Pancreas (tissue), 10 donors: ENCODE measurements at regions of chr15 and their contacts with region 1.

Region 1: DNA sequence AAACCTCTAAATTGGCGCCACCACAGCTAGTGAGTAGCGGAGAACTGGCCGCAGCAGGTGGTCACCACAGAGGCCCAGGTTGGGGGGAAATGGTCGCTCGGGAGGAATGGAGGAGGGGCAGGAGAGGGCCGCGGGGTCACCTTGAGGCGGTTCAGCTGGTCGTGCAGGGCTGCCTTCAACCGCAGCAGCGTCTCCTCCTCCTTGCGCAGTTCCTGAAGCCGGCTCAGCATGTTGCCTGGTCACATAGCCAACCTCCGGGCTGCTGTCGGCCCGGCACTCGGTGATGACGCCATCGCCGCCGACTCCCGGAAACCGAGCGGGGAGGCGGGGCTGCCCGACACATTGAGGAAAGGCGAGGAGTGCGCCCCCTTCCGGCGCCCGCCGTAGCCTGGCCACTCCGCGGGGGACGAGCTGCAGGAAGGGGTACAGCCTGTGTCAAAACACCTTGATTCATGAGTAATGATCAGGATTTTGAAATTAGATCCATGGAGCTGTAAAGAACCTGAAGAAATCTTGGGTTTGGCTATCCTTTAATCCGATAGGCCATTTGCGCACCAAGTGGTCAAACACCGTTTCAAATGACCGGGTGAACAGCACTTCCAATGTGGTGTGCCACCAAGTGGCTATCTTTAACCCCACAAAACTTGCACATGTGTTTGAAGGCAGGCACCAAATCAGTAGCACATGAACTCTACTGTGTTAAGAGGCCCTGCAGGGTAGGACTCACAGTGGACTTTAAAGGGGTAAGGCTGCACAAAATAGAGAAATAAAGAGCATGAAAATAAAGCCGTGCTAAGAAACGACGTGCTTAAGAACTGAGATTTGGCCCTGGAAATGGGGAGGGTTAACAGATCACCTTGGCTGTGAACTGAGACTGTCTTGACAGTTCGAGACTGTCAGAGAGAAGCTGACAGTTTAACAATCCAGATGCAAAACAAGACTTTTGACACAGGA is at the start of gene SNAPC5:
- DNase-seq: peak; percentile 94 to 99 (median 96)
- ATAC-seq: peak; percentile 96 to 98 (median 96)
- H3K4me3 ChIP-seq: peak within 1 kb of the TSS; percentile 52 to 94 (median 74)
- H3K27ac ChIP-seq: peak within 1 kb of the TSS; percentile 64 to 83 (median 74)
- H3K4me1 ChIP-seq: peaks cover 0 to 30% (median 25%) of the 10 kb centered on the region in 3 donors
- H3K27me3 ChIP-seq: no peaks in the 10 kb centered on the region
- CTCF ChIP-seq: peak; percentile 94 to 99 (median 98)
- total RNA-seq, gene SNAPC5: 9.0 to 15.1 (median 11.3) TPM

Region 2: DNA sequence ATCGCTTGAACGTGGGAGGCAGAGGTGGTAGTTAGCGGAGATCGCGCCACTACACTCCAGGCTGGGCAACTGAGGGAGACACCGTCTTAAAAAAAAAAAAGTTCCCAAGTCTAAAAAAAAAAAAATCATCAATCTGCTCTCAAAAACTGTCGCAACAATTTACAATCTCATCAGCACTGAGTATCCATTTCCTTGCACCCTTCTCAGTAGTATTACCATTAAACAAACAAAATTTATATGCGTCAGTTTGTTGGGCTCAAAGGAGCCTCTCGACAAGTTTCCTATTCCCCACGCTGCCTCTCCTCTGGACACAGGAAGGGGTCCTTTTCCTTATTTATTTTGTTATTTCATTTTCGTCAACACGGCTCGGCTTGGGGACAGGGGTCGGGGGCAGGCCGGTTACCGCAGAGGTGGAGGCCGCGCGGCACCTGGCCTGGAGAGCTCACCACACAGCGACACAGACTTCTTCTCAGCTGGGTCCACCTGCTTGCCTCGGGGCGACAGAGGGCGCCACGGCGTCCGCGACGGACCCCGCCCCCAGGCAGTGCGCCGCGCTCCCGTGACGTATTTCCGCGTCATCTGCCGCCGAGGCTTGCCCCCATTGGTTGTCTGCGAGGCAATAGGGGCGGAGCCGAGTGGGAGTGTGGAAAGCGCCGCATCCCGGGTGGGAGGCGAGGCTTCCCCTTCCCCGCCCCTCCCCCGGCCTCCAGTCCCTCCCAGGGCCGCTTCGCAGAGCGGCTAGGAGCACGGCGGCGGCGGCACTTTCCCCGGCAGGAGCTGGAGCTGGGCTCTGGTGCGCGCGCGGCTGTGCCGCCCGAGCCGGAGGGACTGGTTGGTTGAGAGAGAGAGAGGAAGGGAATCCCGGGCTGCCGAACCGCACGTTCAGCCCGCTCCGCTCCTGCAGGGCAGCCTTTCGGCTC is 111.3 kb before region 1 on chr15 and contains the start of gene MAP2K1:
- intact Hi-C with region 1: loop called in 2 of 3 experiments (anchors 10 kb)
- DNase-seq: peak; percentile 98 to 99 (median 99)
- ATAC-seq: peak; percentile 92 to 98 (median 94)
- H3K4me3 ChIP-seq: peak within 1 kb of the TSS; percentile 72 to 93 (median 77)
- H3K27ac ChIP-seq: peak within 1 kb of the TSS; percentile 79 to 94 (median 87)
- H3K4me1 ChIP-seq: peaks cover 0 to 17% (median 7%) of the 10 kb centered on the region in 3 donors
- H3K27me3 ChIP-seq: no peaks in the 10 kb centered on the region
- CTCF ChIP-seq: peak; percentile 36 to 51 (median 44)
- total RNA-seq, gene MAP2K1: 10.1 to 23.3 (median 16.4) TPM